ENCODE measurements at regions of chr19 and their contacts with region 1.

Region 1: DNA sequence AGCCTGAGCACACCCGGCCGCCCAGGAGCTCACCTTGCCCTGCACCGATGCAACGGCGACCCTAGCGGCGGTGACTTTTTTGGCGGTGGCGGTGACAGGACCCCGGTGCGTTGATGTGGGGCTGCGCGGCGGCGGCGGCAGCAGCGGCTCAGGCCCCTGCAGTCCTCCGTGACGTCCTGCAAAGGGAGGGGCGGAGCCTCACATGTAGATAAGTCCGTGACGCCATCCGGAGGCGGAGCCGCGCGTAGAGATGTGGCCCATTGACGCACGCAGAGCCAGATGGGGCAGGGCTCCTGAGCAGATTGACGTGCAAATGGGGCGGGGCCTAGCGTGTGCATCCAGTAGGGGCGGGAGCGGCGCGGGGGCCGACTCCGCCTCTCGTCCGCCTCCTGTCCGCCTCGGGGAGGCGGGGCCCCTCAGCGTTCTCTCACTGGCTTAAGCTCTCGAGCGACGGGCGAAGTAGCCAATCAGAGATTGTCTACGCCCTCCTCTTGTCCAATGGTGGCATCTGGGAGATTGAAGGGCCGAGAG is at the start of gene RAB3A:
- DNase-seq: peak; percentile 100
- ATAC-seq: peak; percentile 94
- H3K4me3 Mint-ChIP-seq: peak within 1 kb of the TSS; percentile 96
- H3K27ac Mint-ChIP-seq: peak within 1 kb of the TSS; percentile 90
- H3K4me1 Mint-ChIP-seq: peaks cover 18% of the 10 kb centered on the region
- H3K27me3 Mint-ChIP-seq: no peaks in the 10 kb centered on the region
- total RNA-seq, gene RAB3A: 5.6 to 8.9 TPM

Region 2: GRCh38 chr19:18160971-18161635 is 42.8 kb before region 1 on chr19:
- CTCF ChIA-PET with region 1: interaction called, 4 read pairs
- POLR2A ChIA-PET with region 1: no interaction called
- intact Hi-C with region 1: loop called in 1 of 2 experiments (anchors 1 kb)
- DNase-seq: peak; percentile 89
- ATAC-seq: peak; percentile 93
- H3K4me3 Mint-ChIP-seq: peak overlapping the region; percentile 70
- H3K27ac Mint-ChIP-seq: no peak overlapping the region
- H3K4me1 Mint-ChIP-seq: peaks cover 9% of the 10 kb centered on the region
- H3K27me3 Mint-ChIP-seq: no peaks in the 10 kb centered on the region

Region 3: GRCh38 chr19:18224525-18225354 is 20.8 kb after region 1 on chr19:
- CTCF ChIA-PET with region 1: interaction called, 12 read pairs
- POLR2A ChIA-PET with region 1: no interaction called
- intact Hi-C with region 1: loop called in 1 of 2 experiments (anchors 1 kb)
- DNase-seq: peak; percentile 96
- ATAC-seq: peak; percentile 100
- H3K4me3 Mint-ChIP-seq: peak overlapping the region; percentile 72
- H3K27ac Mint-ChIP-seq: no peak overlapping the region
- H3K4me1 Mint-ChIP-seq: peaks cover 20% of the 10 kb centered on the region
- H3K27me3 Mint-ChIP-seq: peaks cover 51% of the 10 kb centered on the region

Region 4: GRCh38 chr19:18304458-18305310 is 100.8 kb after region 1 on chr19:
- CTCF ChIA-PET with region 1: no interaction called
- POLR2A ChIA-PET with region 1: no interaction called
- intact Hi-C with region 1: loop called in 1 of 2 experiments (anchors 1 kb)
- DNase-seq: peak; percentile 93
- ATAC-seq: peak; percentile 81
- H3K4me3 Mint-ChIP-seq: peak overlapping the region; percentile 84
- H3K27ac Mint-ChIP-seq: peak overlapping the region; percentile 97
- H3K4me1 Mint-ChIP-seq: peaks cover 50% of the 10 kb centered on the region
- H3K27me3 Mint-ChIP-seq: no peaks in the 10 kb centered on the region

Region 5: GRCh38 chr19:18340190-18340989 is 136.5 kb after region 1 on chr19 and contains the start of gene PGPEP1:
- CTCF ChIA-PET with region 1: no interaction called
- POLR2A ChIA-PET with region 1: no interaction called
- intact Hi-C with region 1: loop called in 1 of 2 experiments (anchors 2 kb)
- DNase-seq: peak; percentile 78
- ATAC-seq: peak; percentile 53
- H3K4me3 Mint-ChIP-seq: peak within 1 kb of the TSS; percentile 69
- H3K27ac Mint-ChIP-seq: peak within 1 kb of the TSS; percentile 93
- H3K4me1 Mint-ChIP-seq: peaks cover 19% of the 10 kb centered on the region
- H3K27me3 Mint-ChIP-seq: no peaks in the 10 kb centered on the region
- total RNA-seq, gene PGPEP1: 20.0 to 20.9 TPM

Region 6: GRCh38 chr19:18649371-18650020 is 445.6 kb after region 1 on chr19:
- CTCF ChIA-PET with region 1: no interaction called
- POLR2A ChIA-PET with region 1: no interaction called
- intact Hi-C with region 1: no loop called
- DNase-seq: no peak
- ATAC-seq: no peak
- H3K4me3 Mint-ChIP-seq: no peak overlapping the region
- H3K27ac Mint-ChIP-seq: no peak overlapping the region
- H3K4me1 Mint-ChIP-seq: peaks cover 12% of the 10 kb centered on the region
- H3K27me3 Mint-ChIP-seq: no peaks in the 10 kb centered on the region